IMR-90 (cell line): ENCODE measurements at regions of chr1 and their contacts with region 1.

Region 1: GRCh38 chr1:159015440-159015909 is 5.8 kb downstream of the IFI16 start:
- DNase-seq: peak; percentile 94
- ATAC-seq: peak; percentile 97
- H3K4me3 ChIP-seq: no peak overlapping the region
- H3K27ac ChIP-seq: peak overlapping the region; percentile 68; the same call in 1 of the 2 replicates
- H3K4me1 ChIP-seq: peaks cover 5% of the 10 kb centered on the region; the same call in 1 of the 2 replicates
- H3K27me3 ChIP-seq: no peaks in the 10 kb centered on the region
- CTCF ChIP-seq: no peak
- POLR2A ChIP-seq: no peak
- RAD21 ChIP-seq: no peak

Region 2: DNA sequence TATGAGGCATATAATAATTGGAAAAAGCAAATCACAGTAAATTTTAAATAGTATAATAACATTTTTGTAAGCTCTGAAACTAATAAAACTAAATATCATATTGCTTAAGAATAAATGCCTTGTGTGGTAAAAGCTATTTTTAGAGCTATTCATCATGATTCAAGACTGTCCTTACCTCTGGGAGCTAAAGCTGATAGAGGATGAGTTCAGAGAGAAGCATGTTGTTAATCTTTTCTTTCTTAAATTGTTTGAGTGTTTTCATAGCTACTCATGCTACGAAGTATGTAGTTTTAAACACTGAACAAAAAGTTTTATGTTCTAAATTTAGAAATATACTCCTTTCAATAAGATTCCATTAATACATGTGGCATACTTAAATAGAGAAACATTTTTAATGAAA is 24.7 kb after region 1 on chr1:
- CTCF ChIA-PET with region 1: no interaction called
- POLR2A ChIA-PET with region 1: no interaction called
- dilution Hi-C with region 1: no loop called
- in situ Hi-C with region 1: no loop called
- intact Hi-C with region 1: loop called (anchors 2 kb)
- DNase-seq: peak; percentile 84
- ATAC-seq: peak; percentile 90
- H3K4me3 ChIP-seq: no peak overlapping the region
- H3K27ac ChIP-seq: no peak overlapping the region
- H3K4me1 ChIP-seq: peaks cover 4% of the 10 kb centered on the region; the same call in 1 of the 2 replicates
- H3K27me3 ChIP-seq: no peaks in the 10 kb centered on the region
- CTCF ChIP-seq: no peak
- POLR2A ChIP-seq: no peak
- RAD21 ChIP-seq: no peak

Region 3: DNA sequence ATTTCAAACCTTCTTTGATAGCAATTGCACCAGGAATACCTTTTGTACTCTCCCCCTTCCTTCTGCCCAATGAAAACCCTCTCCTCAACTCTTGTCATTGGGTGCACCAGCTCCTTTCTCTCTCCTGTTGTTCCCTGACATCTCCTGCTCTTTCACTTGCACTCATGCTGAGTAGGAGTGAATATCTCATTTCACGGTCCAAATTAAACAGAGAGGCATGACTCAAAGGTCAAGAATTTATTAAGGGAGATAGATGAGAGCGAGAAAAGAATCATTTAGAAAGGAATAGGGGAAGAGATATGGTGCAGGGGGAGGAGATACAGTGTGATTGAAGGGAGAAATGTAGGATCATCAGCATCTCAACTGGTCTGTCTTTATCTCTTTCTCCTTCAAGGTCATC is 39.0 kb after region 1 on chr1:
- CTCF ChIA-PET with region 1: no interaction called
- POLR2A ChIA-PET with region 1: no interaction called
- dilution Hi-C with region 1: no loop called
- in situ Hi-C with region 1: no loop called
- intact Hi-C with region 1: loop called (anchors 5 kb)
- DNase-seq: peak; percentile 25
- ATAC-seq: peak; percentile 79
- H3K4me3 ChIP-seq: no peak overlapping the region
- H3K27ac ChIP-seq: no peak overlapping the region
- H3K4me1 ChIP-seq: peaks cover 9% of the 10 kb centered on the region
- H3K27me3 ChIP-seq: no peaks in the 10 kb centered on the region
- CTCF ChIP-seq: no peak
- POLR2A ChIP-seq: no peak
- RAD21 ChIP-seq: no peak